H1 (cell line): ENCODE measurements at regions of chr15 and their contacts with region 1.

Region 1: DNA sequence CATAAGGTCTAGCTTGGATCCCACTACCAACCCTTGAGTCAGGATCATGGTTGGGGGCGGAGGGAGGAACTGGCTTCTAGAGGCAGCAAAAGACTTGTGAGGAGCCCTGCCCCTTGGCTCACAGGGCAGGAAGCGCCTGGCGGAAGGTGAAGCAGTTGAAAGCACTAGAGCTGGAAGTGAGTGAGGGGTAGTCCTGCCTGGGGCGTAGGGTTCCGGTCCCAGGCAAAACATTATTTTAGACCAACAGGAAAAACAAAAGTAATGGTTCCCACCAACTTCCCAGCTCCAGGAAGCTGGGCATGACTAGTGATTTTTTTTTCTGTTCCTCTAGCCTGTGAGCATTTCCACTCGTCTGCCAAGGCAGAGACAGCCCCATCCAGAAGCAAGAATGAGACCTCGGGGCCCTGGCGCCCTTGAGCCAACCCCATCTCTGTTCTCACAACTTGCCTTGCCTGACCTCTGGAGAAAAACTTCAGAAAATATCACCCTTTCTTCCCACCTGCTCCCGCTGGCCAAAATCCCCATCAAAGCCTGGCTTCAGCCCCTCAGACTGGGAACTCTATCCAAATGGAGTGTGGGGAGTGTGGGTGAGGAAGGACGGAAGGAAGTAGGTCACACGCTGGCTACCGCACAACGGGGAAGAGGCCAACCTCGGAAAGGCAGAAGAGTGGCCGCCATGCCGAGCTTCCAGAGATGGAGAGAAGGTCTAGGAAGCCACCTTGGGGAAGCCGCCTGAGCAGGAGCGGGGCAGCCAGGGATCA is 57.5 kb downstream of the RBPMS2 start:
- DNase-seq: no peak
- H3K4me3 ChIP-seq: no peak overlapping the region
- H3K27ac ChIP-seq: no peak overlapping the region; the same call in 1 of the 2 replicates
- H3K4me1 ChIP-seq: no peaks in the 10 kb centered on the region
- H3K27me3 ChIP-seq: no peaks in the 10 kb centered on the region
- CTCF ChIP-seq: no peak
- EP300 ChIP-seq: no peak
- POLR2A ChIP-seq: no peak
- RAD21 ChIP-seq: no peak

Region 2: DNA sequence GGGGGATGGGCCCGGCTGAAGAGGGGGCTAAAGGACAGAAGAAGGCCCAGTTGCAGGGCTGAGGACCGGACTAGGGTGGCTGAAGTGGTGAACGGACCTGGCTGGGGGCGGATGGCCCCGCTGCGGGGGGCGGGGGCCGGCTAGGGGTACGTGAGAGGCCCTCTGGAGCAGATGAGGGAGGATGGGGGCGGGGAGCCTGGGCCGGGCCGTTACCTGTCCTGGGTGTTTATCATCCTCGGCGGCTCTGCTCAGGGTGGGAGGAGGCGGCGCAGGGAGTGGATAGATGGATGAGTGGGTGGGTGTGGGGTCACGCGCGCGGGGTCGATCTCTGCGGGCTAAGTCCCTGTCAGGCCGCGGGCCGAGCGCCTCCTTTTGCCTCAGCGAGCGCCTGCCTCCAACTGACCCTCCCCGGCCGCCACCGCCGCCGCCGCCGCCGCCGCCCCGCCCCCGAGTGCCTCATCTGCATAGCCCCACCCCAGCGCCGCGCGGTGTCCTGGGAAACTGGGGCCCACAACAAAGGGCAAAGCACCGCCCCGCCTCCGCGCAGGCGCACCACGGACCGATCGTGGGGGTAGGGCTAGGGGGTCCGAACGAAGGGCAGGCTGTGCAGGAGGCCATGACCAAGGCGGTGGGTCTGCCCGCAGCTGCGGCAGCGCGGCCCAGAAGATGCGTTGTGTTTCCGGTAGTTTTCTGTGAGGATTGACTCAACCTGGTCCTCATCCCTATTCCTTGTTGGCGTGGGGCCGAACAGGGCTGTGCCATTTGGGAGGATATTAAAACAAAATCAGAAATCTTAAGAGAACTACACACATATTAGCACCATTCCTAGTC is 14.9 kb before region 1 on chr15:
- CTCF ChIA-PET with region 1: interaction called, 10 read pairs
- POLR2A ChIA-PET with region 1: interaction called, 1,192 read pairs
- DNase-seq: peak; percentile 86 to 100
- H3K4me3 ChIP-seq: peak overlapping the region; percentile 70 to 88 (median 85)
- H3K27ac ChIP-seq: peak overlapping the region; percentile 82
- H3K4me1 ChIP-seq: peaks cover 12 to 23% (median 17%) of the 10 kb centered on the region in 4 experiments
- H3K27me3 ChIP-seq: no peaks in the 10 kb centered on the region
- CTCF ChIP-seq: no peak
- EP300 ChIP-seq: peak in 1 of 2 experiments; percentile 51; a peak in 1 of 3 replicates
- POLR2A ChIP-seq: peak; percentile 69 to 90
- RAD21 ChIP-seq: no peak; a peak in 1 of 4 replicates